ENCODE measurements at regions of chr2 and their contacts with region 1.

Region 1: DNA sequence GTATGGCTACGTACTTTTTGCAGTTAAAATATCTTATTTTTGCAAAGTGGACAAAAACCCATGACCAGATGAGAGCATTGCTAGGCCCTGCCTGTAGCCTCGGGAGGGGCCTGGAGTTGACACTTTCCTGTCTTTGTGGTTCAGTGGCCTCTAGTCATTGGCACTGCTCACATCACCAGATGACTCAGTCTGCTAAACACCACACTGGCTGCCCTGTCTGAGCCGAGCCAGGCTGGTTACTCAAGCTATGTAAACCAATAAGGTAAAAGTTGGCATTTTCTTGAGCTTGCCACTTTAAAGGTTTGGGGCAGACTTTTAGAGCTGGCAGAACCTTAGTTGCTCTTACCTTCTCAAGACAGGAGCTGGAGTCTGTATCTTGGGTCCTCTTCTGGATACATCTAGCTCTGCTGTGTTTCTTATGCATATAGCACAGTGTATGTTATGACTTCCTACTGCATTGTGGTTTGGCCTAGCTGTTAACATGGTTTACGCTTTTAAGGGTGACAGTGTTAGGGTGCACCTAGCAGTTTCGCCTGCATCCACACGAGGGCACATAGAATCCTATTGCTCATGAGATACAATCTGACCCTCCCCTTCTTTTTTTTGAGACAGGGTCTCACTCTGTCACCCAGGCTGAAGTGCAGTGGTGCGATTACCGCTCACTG is 76.4 kb downstream of the AP1S3 start:
- DNase-seq: peak; percentile 96
- ATAC-seq: peak; percentile 95
- H3K4me3 ChIP-seq: peak overlapping the region; percentile 27; the same call in 1 of the 2 replicates
- H3K27ac ChIP-seq: peak overlapping the region; percentile 99
- H3K4me1 ChIP-seq: peaks cover 36% of the 10 kb centered on the region
- H3K27me3 ChIP-seq: no peaks in the 10 kb centered on the region
- CTCF ChIP-seq: peak; percentile 62

Region 2: DNA sequence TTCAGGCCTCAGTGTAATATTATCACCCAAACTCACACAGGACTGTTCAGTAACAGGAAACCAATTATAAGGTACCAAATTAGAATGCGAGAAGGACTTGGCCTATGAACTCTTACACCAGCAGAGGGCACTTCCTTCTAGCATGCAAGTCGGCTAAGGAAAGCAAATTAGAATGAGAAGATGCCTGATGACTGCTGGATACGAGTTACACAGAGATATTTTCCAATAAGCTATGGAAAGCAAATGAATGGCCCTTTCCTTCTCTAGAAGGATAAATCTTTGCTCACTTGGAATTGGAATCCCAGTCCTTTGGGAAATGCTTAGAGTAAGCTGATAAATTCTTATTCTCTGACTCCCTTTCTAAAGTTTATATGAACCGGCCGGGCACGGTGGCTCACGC is 33.4 kb before region 1 on chr2:
- CTCF ChIA-PET with region 1: no interaction called
- POLR2A ChIA-PET with region 1: interaction called, 3 read pairs
- intact Hi-C with region 1: loop called (anchors 1 kb)
- DNase-seq: peak; percentile 69
- ATAC-seq: peak; percentile 40
- H3K4me3 ChIP-seq: no peak overlapping the region
- H3K27ac ChIP-seq: peak overlapping the region; percentile 24
- H3K4me1 ChIP-seq: peaks cover 28% of the 10 kb centered on the region
- H3K27me3 ChIP-seq: no peaks in the 10 kb centered on the region
- CTCF ChIP-seq: peak; percentile 83

Region 3: DNA sequence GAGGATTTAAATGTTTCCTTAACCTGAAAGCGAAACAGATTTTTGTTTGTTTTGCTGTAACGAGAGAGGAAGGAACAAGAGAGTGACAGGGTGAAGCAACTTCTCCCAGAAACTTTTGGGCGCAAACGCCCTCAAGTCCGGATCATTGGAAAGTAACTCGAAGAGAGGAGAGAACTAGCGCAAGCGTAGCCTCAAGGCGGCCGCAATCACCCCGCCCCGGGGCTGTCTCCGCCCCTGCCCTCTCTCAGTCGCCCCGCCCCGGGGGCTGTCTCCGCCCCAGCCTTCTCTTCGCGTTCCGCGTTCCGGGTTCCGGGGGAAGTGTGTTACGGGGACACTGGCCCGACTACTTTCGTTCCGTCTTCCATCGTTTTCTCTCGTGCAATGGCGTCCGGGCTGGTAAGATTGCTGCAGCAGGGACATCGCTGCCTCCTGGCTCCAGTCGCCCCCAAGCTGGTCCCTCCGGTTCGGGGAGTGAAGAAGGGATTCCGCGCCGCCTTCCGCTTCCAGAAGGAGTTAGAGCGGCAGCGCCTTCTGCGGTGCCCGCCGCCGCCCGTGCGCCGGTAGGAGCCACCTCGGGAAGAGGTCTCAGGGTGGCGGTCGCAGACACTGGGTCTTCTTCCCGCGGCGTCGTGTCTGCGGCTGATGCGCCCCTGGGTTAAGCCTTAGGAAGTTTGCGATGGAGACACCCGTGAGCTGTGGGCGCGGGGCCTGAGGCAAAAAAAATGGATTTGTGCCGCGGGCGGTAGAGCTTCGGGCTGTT is 196.3 kb after region 1 on chr2 and contains the start of gene MRPL44:
- CTCF ChIA-PET with region 1: no interaction called
- POLR2A ChIA-PET with region 1: no interaction called
- intact Hi-C with region 1: loop called (anchors 5 kb)
- DNase-seq: peak; percentile 97
- ATAC-seq: peak; percentile 99
- H3K4me3 ChIP-seq: peak within 1 kb of the TSS; percentile 90
- H3K27ac ChIP-seq: peak within 1 kb of the TSS; percentile 16; the same call in 1 of the 2 replicates
- H3K4me1 ChIP-seq: peaks cover 33% of the 10 kb centered on the region
- H3K27me3 ChIP-seq: no peaks in the 10 kb centered on the region
- CTCF ChIP-seq: no peak
- total RNA-seq, gene MRPL44: 22.4 and 24.8 TPM in 2 replicates

Region 4: DNA sequence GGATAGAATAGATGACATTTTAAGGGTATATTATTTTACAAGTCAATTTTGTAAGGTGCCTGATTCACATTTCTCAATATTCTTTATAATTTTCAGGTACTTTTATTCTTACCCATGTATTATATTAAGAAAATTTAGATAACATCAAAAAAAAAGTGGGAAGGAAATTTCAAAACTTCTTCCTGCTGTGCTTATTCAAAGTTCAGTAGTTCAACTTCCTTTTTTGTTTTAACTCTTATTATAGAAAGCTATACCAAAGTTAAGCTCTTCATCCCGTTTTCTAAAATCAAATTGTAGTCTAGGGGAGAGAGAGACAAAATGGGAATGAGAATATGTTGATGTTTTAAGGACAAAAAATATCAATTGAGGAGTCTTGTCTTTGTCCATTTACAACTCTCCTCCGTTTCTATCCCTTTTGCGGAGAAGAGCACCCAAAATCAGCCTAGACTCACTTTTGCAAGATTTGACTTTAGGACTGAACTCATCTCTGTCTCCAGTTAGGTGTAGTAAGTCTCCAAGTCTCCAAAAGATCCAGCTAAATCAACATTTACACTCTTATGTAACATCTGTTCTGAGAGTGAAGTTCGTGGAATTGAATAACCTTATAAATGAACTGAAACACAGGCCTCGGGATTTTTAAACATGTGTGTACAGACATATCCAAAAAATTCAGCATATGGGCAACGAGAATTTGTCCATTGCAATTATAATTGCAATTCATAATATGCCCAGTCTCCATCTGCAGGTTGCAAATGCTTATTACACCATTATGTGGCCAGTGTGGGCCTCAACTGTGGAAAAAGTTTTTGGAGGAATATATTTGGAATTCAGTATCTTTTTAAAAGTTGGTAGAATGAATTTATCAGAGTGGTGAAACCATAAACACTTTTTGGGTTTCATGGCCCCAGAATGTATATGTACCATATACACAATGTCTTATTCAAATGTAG is 617.1 kb after region 1 on chr2:
- CTCF ChIA-PET with region 1: no interaction called
- POLR2A ChIA-PET with region 1: no interaction called
- intact Hi-C with region 1: no loop called
- DNase-seq: peak; percentile 32
- ATAC-seq: peak; percentile 54; the same call in 1 of the 2 replicates
- H3K4me3 ChIP-seq: no peak overlapping the region
- H3K27ac ChIP-seq: no peak overlapping the region
- H3K4me1 ChIP-seq: peaks cover 10% of the 10 kb centered on the region; the same call in 1 of the 2 replicates
- H3K27me3 ChIP-seq: no peaks in the 10 kb centered on the region
- CTCF ChIP-seq: peak; percentile 51; the same call in 1 of the 2 replicates

Region 5: DNA sequence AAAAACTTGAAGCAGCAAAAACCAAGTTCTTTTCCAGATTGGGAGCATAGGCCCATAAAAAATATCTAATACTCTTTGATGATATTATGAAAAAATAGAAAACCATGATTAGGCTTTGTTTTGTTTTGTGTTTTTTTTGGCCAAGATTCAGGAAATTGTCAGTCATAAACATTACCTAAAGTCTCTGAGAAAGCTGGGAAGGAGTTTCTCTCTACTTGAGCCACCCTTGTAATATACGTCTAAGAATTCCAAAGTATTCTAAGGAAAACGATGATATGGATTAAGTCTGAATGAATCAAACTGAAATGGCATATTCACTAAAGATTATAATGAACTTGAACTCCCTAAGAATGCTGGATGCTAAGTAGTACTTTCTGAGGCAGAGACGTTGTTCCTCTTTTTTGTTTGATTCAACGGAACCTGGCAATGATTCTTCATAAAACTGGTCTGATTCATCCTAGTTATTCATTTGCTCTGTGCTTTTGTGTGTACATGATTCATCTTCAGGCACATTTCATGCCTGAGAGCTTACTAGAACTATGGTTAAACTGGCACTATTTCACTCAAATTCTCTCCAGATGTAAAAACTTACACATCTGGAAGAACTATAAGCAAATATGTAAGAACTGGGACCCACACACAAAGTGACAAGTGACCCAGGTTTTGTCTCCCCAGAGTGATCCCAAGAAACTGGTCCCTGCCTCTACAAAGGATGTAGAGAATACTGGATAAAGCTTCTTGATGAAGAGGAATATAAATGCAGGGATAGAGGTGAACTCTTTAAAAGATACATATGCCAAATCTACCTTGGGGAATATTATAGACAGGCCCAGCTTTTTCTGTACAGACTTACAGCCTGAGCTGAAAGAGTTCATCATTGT is 1121.6 kb after region 1 on chr2:
- CTCF ChIA-PET with region 1: no interaction called
- POLR2A ChIA-PET with region 1: interaction called, 12 read pairs
- intact Hi-C with region 1: no loop called
- DNase-seq: peak; percentile 87
- ATAC-seq: peak; percentile 84
- H3K4me3 ChIP-seq: no peak overlapping the region
- H3K27ac ChIP-seq: peak overlapping the region; percentile 72
- H3K4me1 ChIP-seq: peaks cover 50% of the 10 kb centered on the region
- H3K27me3 ChIP-seq: no peaks in the 10 kb centered on the region
- CTCF ChIP-seq: no peak

Measured in PC-3 (cell line).